K562 (cell line): ENCODE measurements at regions of chr7 and their contacts with region 1.

Region 1: GRCh38 chr7:75914730-75915585 is at the start of gene POR:
- DNase-seq: peak; percentile 96 to 97 (median 97)
- ATAC-seq: peak; percentile 97
- H3K4me3 ChIP-seq: peak within 1 kb of the TSS; percentile 97
- H3K27ac ChIP-seq: peak within 1 kb of the TSS; percentile 76
- H3K4me1 ChIP-seq: peaks cover 20 to 27% of the 10 kb centered on the region in 2 experiments; a peak in 4 of 5 replicates
- H3K27me3 ChIP-seq: no peaks in the 10 kb centered on the region
- CTCF ChIP-seq: peak in 2 of 3 experiments; percentile 5 to 25; a peak in 2 of 6 replicates
- EP300 ChIP-seq: peak; percentile 40
- POLR2A ChIP-seq: peak; percentile 93
- RAD21 ChIP-seq: no peak
- polyA plus RNA-seq, gene POR: 4.7 to 10.6 TPM

Region 2: DNA sequence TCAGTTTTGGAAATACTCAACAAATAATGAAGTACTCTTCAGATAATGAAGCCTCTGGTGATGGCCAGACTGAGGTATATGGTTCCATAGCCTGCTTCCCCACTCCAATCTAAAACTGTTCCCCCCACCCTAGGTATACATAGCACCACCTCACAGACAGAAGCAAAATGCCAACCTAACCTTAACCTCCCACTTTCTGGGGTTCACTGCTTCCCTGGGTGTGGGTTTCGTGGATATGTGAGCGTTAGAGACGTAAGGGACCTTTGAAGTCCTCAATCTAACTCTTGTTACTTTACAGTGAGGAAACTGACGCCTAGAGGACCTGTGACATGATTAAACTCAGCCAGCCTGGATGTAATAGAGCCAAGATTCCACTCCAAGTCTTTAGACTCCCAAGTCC is 34.7 kb before region 1 on chr7:
- CTCF ChIA-PET with region 1: no interaction called
- POLR2A ChIA-PET with region 1: no interaction called
- in situ Hi-C with region 1: no loop called
- intact Hi-C with region 1: no loop called
- DNase-seq: no peak
- ATAC-seq: no peak
- H3K4me3 ChIP-seq: no peak overlapping the region
- H3K27ac ChIP-seq: no peak overlapping the region; the same call in 2 of the 3 replicates
- H3K4me1 ChIP-seq: peaks cover 21 to 22% of the 10 kb centered on the region in 2 experiments
- H3K27me3 ChIP-seq: no peaks in the 10 kb centered on the region
- CTCF ChIP-seq: no peak
- EP300 ChIP-seq: no peak
- POLR2A ChIP-seq: no peak
- RAD21 ChIP-seq: 0 out of 4 replicates have a peak, but pooled peaks of 1 of the 2 experiments have one; percentile 3

Region 3: GRCh38 chr7:75928331-75928909 is 13.5 kb after region 1 on chr7:
- CTCF ChIA-PET with region 1: no interaction called
- POLR2A ChIA-PET with region 1: interaction called, 48 read pairs
- in situ Hi-C with region 1: no loop called
- intact Hi-C with region 1: no loop called
- DNase-seq: no peak
- ATAC-seq: no peak; the same call in 1 of the 3 replicates
- H3K4me3 ChIP-seq: no peak overlapping the region
- H3K27ac ChIP-seq: 0 out of 3 replicates have a peak overlapping the region, but pooled peaks have one; percentile 13
- H3K4me1 ChIP-seq: 0 out of 5 replicates have a peak, but pooled peaks cover 0 to under 1% of the 10 kb centered on the region in 2 experiments
- H3K27me3 ChIP-seq: no peaks in the 10 kb centered on the region
- CTCF ChIP-seq: no peak
- EP300 ChIP-seq: no peak
- POLR2A ChIP-seq: no peak
- RAD21 ChIP-seq: no peak